HEK293T (cell line): ENCODE measurements at regions of chr15 and their contacts with region 1.

Region 1: GRCh38 chr15:58770857-58771620 is at the start of gene MINDY2:
- DNase-seq: peak; percentile 84

Region 2: DNA sequence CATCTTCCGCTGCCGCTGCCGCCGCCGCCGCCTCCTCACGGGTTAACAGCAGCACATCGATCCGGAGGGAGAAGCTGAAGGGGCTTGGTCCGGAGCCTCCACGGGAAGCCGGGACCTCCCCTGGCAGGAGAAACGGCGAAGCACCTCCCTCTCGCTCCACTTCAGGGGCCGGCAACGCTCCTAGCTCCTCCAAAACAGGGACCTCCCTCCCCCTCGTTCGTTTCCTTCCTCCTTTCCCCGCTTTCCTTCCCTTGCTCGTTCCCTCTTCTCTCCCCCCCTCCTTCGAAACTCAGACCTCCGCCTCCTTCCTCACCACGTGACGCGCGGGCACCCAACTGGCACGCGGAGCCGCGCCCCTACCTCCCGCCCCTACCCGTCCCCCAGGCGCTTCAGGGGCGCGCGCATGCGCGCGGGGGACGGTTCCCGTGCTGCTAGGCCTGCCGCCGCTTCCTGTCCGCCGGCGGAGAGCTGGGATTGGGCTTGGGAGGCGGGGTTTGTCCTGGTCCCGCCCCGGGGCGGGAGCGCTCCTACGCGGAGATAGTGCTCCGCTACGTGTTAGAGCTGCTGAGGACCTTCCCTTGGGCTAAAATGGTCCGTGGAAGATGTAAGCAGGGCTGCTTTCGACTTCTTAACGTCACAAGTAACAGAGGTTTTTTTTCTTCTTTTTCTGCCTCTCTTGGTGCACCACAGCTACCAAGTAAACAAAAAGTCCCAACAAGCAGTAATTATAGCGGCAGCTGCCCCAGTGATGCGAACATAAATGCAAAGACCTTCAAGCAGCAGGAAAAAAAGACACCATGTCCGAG is 21.3 kb before region 1 on chr15 and contains the start of gene ADAM10:
- CTCF ChIA-PET with region 1: interaction called, 6 read pairs
- POLR2A ChIA-PET with region 1: interaction called, 48 read pairs
- DNase-seq: peak; percentile 94

Region 3: GRCh38 chr15:58758138-58758537 is 12.9 kb before region 1 on chr15:
- CTCF ChIA-PET with region 1: no interaction called
- POLR2A ChIA-PET with region 1: interaction called, 11 read pairs
- DNase-seq: no peak